ENCODE measurements at regions of chr17 and their contacts with region 1.

Region 1: GRCh38 chr17:58344047-58344790 is 7.8 kb downstream of the SUPT4H1 start:
- DNase-seq: peak; percentile 91
- ATAC-seq: peak; percentile 76
- H3K4me3 Mint-ChIP-seq: peak overlapping the region; percentile 99
- H3K27ac Mint-ChIP-seq: peak overlapping the region; percentile 92
- H3K4me1 Mint-ChIP-seq: peaks cover 82% of the 10 kb centered on the region
- H3K27me3 Mint-ChIP-seq: no peaks in the 10 kb centered on the region

Region 2: DNA sequence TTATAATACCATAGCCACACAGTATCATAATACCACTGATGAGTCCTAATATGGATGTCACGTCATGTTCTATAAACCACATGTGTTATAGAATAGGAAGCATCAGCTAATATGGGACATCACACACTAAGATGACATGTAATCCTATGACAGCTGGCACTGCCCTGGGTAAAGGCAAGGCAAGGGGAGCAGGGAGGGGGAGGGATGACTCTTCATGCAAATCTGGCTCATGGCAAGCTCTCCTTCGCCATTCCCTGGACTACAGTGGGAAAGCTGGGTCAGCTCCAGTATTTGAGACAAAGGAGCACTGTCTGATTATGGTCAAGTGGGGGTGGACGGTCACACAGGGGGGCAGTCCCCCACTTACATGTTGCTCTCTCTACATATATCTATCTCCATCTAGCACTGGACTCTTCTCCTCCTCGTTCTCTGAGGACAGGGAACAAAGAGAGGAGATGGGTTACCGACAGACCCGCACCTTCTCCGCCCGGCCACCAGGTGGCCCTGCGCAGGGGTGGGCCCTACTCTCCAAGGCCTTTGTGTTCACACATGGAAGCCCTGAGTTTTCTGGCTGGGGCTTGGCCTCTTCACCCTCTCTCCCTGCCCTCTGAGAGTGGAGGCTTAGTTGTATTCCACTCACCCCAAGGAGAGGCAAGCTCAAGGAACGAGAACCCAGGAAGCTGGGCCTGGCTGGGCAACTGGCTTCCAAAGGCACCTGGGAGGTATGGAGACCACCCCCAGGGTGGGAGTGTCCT is 40.1 kb before region 1 on chr17:
- CTCF ChIA-PET with region 1: interaction called, 15 read pairs
- POLR2A ChIA-PET with region 1: interaction called, 4 read pairs
- DNase-seq: peak; percentile 74
- ATAC-seq: peak; percentile 73
- H3K4me3 Mint-ChIP-seq: no peak overlapping the region
- H3K27ac Mint-ChIP-seq: no peak overlapping the region
- H3K4me1 Mint-ChIP-seq: peaks cover 3% of the 10 kb centered on the region
- H3K27me3 Mint-ChIP-seq: peaks cover 8% of the 10 kb centered on the region

Region 3: DNA sequence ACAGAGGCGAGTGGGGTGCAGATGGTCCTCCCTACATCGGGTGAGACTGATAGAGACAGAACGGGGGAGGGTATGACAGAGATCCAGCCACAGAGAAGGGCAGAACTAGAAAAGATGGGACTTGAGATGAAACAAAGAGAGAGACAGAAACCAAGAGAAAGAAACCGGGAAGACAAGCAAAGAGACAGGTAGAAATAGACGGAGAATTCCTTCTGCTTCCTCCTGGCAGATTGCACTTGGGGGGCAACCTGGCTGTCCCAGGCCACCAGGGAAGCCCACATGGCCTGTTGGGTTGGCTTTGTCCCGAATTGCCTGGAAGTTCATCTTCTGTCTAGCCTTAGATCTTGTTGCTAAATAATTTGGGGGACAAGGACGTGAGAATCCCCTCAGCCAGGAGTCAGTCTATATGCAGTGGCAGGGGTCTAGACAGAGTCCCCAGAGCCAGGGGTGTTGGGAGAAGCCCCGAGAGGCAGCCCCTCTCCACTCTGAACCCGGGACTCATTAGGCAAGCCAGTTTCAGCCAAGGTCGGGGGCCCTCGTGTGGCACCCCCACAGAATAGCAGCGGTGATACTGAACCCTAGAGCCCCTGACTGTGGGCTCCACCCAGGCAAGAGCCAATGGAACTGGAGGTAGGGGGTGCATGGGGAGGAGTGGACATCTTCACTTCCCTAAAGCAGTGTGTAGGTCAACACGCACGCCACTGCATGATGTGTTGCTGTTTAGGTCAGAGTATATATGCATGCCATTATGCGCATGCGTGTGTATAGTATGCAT is 15.0 kb before region 1 on chr17:
- CTCF ChIA-PET with region 1: interaction called, 165 read pairs
- POLR2A ChIA-PET with region 1: interaction called, 2,649 read pairs
- DNase-seq: peak; percentile 90
- ATAC-seq: peak; percentile 18
- H3K4me3 Mint-ChIP-seq: peak overlapping the region; percentile 99
- H3K27ac Mint-ChIP-seq: peak overlapping the region; percentile 92
- H3K4me1 Mint-ChIP-seq: peaks cover 42% of the 10 kb centered on the region
- H3K27me3 Mint-ChIP-seq: peaks cover 12% of the 10 kb centered on the region

Region 4: GRCh38 chr17:58525181-58525601 is 181.0 kb after region 1 on chr17:
- CTCF ChIA-PET with region 1: no interaction called
- POLR2A ChIA-PET with region 1: no interaction called
- DNase-seq: no peak
- ATAC-seq: no peak
- H3K4me3 Mint-ChIP-seq: no peak overlapping the region
- H3K27ac Mint-ChIP-seq: no peak overlapping the region
- H3K4me1 Mint-ChIP-seq: peaks cover 16% of the 10 kb centered on the region
- H3K27me3 Mint-ChIP-seq: peaks cover 16% of the 10 kb centered on the region